ENCODE measurements at regions of chr10 and their contacts with region 1.

Region 1: GRCh38 chr10:51137756-51138529 is 63.7 kb downstream of the PRKG1 start:
- DNase-seq: no peak
- H3K4me3 Mint-ChIP-seq: no peak overlapping the region
- H3K27ac Mint-ChIP-seq: no peak overlapping the region
- H3K4me1 Mint-ChIP-seq: peaks cover 6% of the 10 kb centered on the region
- H3K27me3 Mint-ChIP-seq: no peaks in the 10 kb centered on the region
- CTCF ChIP-seq: no peak

Region 2: GRCh38 chr10:51171946-51172345 is 34.0 kb after region 1 on chr10:
- CTCF ChIA-PET with region 1: interaction called, 3 read pairs
- POLR2A ChIA-PET with region 1: no interaction called
- intact Hi-C with region 1: loop called (anchors 2 kb)
- DNase-seq: peak; percentile 59
- H3K4me3 Mint-ChIP-seq: no peak overlapping the region
- H3K27ac Mint-ChIP-seq: no peak overlapping the region
- H3K4me1 Mint-ChIP-seq: peaks cover 23% of the 10 kb centered on the region
- H3K27me3 Mint-ChIP-seq: no peaks in the 10 kb centered on the region
- CTCF ChIP-seq: no peak

Measured in MCF 10A (cell line).